ENCODE measurements at regions of chr13 and their contacts with region 1.

Region 1: GRCh38 chr13:42271337-42272114 is 426 bp upstream of the AKAP11 start:
- DNase-seq: peak; percentile 95
- H3K4me3 Mint-ChIP-seq: peak overlapping the region; percentile 78
- H3K27ac Mint-ChIP-seq: peak overlapping the region; percentile 91
- H3K4me1 Mint-ChIP-seq: peaks cover 44% of the 10 kb centered on the region
- H3K27me3 Mint-ChIP-seq: no peaks in the 10 kb centered on the region

Region 2: GRCh38 chr13:41916173-41916954 is 355.2 kb before region 1 on chr13:
- intact Hi-C with region 1: loop called (anchors 5 kb)
- DNase-seq: no peak
- H3K4me3 Mint-ChIP-seq: peak overlapping the region; percentile 71
- H3K27ac Mint-ChIP-seq: peak overlapping the region; percentile 93
- H3K4me1 Mint-ChIP-seq: peaks cover 53% of the 10 kb centered on the region
- H3K27me3 Mint-ChIP-seq: no peaks in the 10 kb centered on the region

Region 3: GRCh38 chr13:42028113-42028799 is 243.3 kb before region 1 on chr13:
- intact Hi-C with region 1: no loop called
- DNase-seq: no peak
- H3K4me3 Mint-ChIP-seq: no peak overlapping the region
- H3K27ac Mint-ChIP-seq: no peak overlapping the region
- H3K4me1 Mint-ChIP-seq: no peaks in the 10 kb centered on the region
- H3K27me3 Mint-ChIP-seq: peaks cover 17% of the 10 kb centered on the region

Region 4: DNA sequence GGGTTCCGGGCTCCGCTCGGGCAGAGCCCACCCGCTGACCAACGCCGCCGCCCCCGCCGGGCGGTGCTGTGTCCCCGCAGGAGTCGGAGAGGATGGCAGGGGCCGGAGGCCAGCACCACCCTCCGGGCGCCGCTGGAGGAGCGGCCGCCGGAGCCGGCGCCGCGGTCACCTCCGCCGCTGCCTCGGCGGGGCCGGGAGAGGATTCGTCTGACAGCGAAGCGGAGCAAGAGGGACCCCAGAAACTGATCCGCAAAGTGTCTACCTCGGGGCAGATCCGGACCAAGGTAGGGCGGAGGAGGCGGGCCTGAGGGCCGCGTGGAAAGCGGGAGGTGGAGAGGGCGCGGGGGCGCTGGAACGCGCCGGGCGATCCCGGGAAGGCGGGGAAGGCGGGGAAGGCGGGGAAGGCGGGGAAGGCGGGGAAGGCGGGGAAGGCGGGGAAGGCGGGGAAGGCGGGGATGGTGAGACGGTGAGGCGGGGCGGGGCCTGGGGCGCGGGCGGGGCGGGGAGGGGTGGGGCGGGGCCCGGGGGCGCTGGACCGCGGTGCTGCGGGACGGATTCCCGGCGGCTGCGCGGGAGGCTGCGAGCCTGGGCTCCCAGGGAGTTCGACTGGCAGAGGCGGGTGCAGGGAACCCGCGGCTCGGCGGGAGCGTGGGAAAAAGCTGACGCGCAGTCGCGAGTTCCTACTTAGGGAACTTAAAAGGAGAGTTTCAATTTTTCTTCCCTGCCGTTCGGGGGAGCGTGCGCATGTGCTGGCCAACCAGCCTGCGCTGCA is 222.7 kb before region 1 on chr13:
- intact Hi-C with region 1: loop called (anchors 5 kb)
- DNase-seq: peak; percentile 59
- H3K4me3 Mint-ChIP-seq: peak overlapping the region; percentile 87
- H3K27ac Mint-ChIP-seq: peak overlapping the region; percentile 75
- H3K4me1 Mint-ChIP-seq: peaks cover 27% of the 10 kb centered on the region
- H3K27me3 Mint-ChIP-seq: peaks cover 3% of the 10 kb centered on the region

Region 5: DNA sequence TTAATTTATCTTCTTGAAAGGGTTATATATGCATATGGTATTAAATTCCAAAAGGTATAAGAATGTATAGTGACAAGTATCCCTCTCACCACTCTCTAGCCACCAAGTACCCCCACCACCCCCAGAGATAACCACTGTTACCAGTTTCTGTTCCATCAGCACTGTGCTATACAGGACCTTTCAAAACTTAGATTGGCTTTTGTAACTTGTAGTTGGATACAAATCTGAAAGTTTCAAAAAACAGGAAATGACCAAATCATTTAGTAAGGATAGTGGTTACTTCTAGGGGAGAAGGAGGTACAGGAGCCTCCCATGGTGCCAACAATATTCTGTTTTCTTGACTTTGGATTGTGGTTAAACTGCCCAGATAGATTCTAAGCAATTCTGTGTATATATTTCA is 57.1 kb after region 1 on chr13:
- intact Hi-C with region 1: loop called (anchors 5 kb)
- DNase-seq: no peak
- H3K4me3 Mint-ChIP-seq: no peak overlapping the region
- H3K27ac Mint-ChIP-seq: peak overlapping the region; percentile 79
- H3K4me1 Mint-ChIP-seq: peaks cover 40% of the 10 kb centered on the region
- H3K27me3 Mint-ChIP-seq: no peaks in the 10 kb centered on the region

Region 6: GRCh38 chr13:42354241-42355091 is 82.9 kb after region 1 on chr13:
- intact Hi-C with region 1: loop called (anchors 1 kb)
- DNase-seq: no peak
- H3K4me3 Mint-ChIP-seq: peak overlapping the region; percentile 77
- H3K27ac Mint-ChIP-seq: peak overlapping the region; percentile 100
- H3K4me1 Mint-ChIP-seq: peaks cover 64% of the 10 kb centered on the region
- H3K27me3 Mint-ChIP-seq: no peaks in the 10 kb centered on the region

Region 7: DNA sequence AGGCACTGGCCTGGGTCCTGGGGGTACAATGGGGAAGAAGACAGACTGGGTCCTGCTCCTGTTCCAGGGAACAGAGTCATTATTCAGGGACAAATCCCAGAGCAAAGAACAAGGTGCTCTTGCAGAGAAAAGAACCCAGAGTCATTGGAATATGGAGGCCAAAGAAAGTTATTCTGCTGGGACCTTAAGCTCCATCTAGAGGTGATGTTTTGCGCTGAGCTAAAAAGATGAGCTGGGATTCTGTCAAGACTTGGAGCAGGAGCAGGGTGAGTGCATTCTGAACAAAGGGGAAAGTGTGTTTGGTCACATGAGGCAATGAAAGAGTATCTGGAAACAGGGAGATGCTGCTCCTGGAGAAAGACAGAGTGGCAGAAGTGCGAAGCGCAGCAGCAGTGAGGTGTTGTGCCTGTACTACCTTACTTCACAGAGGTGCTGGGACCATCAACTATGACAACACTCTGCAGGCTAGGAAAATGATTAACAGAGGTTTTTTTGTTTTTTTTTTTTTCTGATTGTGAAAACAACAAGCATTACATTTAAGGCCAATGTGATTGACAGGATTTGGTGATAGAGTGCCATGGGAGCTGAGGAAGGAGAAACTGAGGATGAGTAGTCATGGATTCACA is 207.1 kb after region 1 on chr13:
- intact Hi-C with region 1: no loop called
- DNase-seq: no peak
- H3K4me3 Mint-ChIP-seq: no peak overlapping the region
- H3K27ac Mint-ChIP-seq: peak overlapping the region; percentile 19
- H3K4me1 Mint-ChIP-seq: peaks cover 38% of the 10 kb centered on the region
- H3K27me3 Mint-ChIP-seq: no peaks in the 10 kb centered on the region

Region 8: DNA sequence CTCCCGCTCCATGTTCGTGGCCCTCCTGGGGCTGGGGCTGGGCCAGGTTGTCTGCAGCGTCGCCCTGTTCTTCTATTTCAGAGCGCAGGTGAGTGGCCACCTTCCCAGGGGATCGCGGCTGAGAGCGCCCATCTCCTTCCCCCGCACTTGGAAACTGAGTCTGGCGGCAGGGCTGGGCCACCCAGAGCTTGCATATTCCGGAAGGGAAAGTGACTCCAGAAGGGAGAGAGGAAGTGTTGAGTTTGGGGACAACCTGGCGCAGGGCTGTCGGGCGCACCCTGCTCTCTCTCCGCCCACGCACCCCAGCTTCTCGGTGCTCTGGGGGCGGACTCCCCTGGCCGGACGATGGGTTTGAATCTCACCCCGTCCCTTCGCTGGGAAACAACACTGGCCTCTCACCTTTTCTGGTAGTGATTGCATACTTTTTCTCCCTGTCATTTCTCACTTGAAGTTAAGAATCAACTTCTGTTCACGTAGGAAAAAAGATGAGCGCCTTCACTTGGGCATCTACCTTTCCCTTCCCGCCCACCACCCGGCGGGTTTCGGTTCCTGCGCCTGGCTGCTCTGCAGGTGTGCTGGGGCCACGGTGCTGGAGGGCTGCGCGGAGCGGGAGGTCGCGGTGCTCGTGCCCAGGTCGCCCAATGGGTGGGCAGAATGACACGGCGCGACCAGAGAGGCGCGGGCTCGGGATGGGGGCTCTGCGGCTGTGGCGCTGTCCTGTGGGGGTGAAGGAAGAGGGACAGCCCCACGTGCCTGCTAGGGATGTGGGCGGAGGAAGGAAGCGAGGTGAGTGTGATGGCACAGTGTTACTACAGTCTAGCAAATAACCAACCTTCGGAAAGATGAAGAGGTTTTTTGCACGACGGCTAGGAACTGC is 303.1 kb after region 1 on chr13:
- intact Hi-C with region 1: loop called (anchors 2 kb)
- DNase-seq: peak; percentile 30
- H3K4me3 Mint-ChIP-seq: peak overlapping the region; percentile 74
- H3K27ac Mint-ChIP-seq: peak overlapping the region; percentile 75
- H3K4me1 Mint-ChIP-seq: peaks cover 43% of the 10 kb centered on the region
- H3K27me3 Mint-ChIP-seq: peaks cover 5% of the 10 kb centered on the region

Region 9: GRCh38 chr13:43041369-43041921 is 769.9 kb after region 1 on chr13:
- intact Hi-C with region 1: loop called (anchors 10 kb)
- DNase-seq: no peak
- H3K4me3 Mint-ChIP-seq: no peak overlapping the region
- H3K27ac Mint-ChIP-seq: no peak overlapping the region
- H3K4me1 Mint-ChIP-seq: peaks cover 40% of the 10 kb centered on the region
- H3K27me3 Mint-ChIP-seq: no peaks in the 10 kb centered on the region

Measured in activated T-helper 2 cell treated with anti-CD3 and anti-CD28 coated beads, Interferon-gamma antibody, Interleukin-2, Interleukin-4, amounts not matched to agents 10 μg/mL and 5 μg/mL and 100 μg/mL, durations not matched to agents 14 hours and 24 hours and 36 hours (primary cell).